Right ventricle myocardium inferior (tissue), 1 donor: ENCODE measurements at regions of chr12 and their contacts with region 1.

Region 1: DNA sequence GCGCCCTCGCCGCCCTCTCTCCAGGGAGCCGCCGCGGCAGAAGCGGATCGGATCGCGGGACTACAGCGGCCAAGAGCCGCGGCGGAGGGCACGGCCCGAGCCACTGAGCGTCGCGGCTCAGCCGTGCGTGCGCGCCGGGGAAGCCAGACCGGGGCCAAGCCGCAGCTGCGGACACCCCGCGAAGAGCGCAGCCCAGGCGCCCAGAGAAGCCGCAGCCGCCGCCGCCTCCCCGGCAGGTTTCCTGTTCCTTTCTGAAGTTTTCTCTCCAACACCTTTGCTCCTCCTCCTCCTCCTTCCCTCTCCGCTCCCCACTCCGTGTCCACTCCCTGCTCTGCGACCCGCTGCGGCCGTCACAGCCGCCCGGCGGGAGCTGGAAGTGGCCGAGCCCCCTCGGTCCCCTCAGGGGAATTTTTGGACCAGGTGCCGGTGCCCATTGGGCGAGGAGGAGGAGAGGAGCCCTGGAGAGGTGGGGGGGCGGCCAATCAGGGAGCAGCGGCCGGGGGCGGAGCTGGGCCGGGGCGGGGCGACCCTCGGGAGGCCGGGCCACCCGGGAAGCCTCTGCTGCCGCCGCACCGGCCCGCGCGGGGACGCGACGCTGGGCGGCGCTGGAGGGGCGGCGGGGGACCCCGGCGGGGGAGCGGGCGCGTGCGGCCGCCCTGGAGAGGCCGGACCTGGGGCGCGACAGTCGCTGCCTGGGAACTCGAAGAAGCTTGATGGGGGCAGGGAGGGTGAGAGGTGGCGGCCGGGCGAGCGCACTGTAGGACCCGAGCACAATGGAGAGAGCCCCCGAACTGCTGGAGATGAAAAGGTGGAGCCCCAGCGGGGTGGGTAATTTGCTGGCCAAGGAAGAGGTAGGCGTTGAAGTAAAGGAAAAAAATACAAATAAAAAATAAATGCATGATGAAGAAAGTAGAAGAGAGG is at the start of gene ITPR2:
- DNase-seq: peak; percentile 95
- ATAC-seq: peak; percentile 97
- total RNA-seq, gene ITPR2: 14.3 TPM

Region 2: GRCh38 chr12:26113853-26114719 is 719.0 kb before region 1 on chr12:
- intact Hi-C with region 1: loop called (anchors 10 kb)
- DNase-seq: peak; percentile 96
- ATAC-seq: peak; percentile 96

Region 3: GRCh38 chr12:26723379-26724308 is 109.4 kb before region 1 on chr12:
- intact Hi-C with region 1: loop called (anchors 10 kb)
- DNase-seq: no peak
- ATAC-seq: peak; percentile 84

Region 4: DNA sequence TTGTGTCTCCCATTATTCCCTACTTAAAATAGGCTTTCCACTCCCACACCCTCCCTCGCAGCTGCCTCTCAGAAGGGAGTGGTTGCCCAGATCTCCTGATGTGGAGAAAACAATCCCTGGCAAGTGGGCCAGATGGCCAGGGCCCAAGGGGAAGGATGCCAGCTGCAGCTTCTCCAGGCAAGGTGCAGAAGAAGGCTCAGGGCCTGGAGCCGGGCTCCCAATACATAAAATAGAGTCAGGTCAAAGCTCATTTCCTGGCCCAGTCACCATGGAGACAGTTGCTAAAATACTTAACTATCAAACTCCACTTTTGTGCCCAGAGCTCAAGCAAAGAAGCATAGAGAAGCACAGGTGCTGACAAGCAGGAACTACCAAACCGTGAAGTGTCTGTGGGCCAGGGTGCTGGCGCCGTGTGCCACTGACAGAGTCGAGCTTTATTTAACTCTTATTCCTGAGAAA is 45.6 kb after region 1 on chr12:
- intact Hi-C with region 1: loop called (anchors 1 kb)
- DNase-seq: peak; percentile 78
- ATAC-seq: peak; percentile 92